Head of caudate nucleus (tissue), 42 donors: ENCODE measurements at regions of chr6 and their contacts with region 1.

Region 1: DNA sequence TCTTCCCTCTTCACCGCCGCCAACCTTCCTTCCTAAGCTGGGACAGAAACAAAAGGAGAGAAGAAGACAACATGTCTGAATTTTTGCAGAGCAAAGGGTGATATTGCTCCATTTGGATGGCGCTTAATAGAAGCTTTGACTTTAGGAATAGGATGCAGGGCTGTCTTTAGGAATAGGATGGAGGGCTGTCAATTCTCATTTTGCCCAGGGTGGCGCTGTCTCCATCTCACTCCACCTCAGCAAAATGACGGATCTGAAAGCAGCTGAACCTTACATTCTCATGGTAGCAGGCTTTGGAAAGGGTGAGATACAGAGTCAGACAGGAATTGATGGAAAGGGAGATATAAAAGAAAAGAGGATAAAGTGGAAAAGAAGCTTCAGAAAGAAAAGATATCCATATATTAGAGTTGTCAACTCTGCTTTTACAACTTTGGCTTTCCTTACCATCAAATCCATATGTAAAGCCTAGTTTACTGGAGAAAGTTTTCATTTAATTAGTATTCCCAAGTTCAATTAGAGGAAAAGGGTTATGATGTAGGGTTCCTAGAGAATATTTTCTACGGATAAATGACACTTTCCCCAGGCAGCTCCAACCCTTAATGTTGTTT is 2.4 kb downstream of the MTCL3 start:
- DNase-seq: peak; percentile 37 to 89 (median 76)

Region 2: DNA sequence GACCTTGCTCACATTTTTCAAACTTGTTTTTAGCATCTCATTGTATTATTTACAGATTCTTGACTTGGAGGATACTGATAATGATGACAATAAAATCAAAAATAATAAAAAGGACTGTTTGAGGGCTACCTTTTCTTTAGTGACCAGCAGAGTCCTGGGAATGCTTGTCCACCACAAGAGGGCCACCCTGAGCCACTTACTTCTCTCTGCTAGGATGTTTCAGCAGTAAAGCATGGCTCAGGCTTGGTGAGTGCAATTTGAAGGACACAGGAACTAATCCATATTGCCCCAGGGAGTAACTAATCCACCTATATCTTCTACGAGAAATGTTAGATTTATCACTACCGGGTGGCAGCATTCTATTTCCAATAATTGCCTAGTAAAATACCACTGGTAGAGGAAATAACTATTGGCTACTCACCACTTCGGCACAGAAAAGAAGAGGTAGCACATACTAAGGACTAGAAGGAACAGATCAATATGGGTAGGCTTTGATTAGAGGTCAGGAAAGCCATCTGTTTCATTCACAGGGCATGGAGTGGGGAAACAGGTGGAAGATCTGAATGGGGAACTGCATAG is 51.8 kb before region 1 on chr6:
- intact Hi-C with region 1: loop called (anchors 10 kb)
- DNase-seq: peak; percentile 43 to 91 (median 76)